K562 (cell line): ENCODE measurements at regions of chr2 and their contacts with region 1.

Region 1: GRCh38 chr2:27133905-27134780 is at the start of gene PREB:
- DNase-seq: peak; percentile 97 to 99 (median 98)
- ATAC-seq: peak; percentile 98
- H3K4me3 ChIP-seq: peak within 1 kb of the TSS; percentile 98
- H3K27ac ChIP-seq: peak within 1 kb of the TSS; percentile 85
- H3K4me1 ChIP-seq: peaks cover 15 to 35% of the 10 kb centered on the region in 2 experiments; a peak in 4 of 5 replicates
- H3K27me3 ChIP-seq: no peaks in the 10 kb centered on the region
- CTCF ChIP-seq: peak; percentile 47 to 52 (median 50); a peak in 5 of 6 replicates
- EP300 ChIP-seq: no peak
- POLR2A ChIP-seq: peak; percentile 86
- RAD21 ChIP-seq: peak in 1 of 2 experiments; percentile 32; a peak in 2 of 4 replicates
- polyA plus RNA-seq, gene PREB: 35.1 to 35.4 TPM

Region 2: GRCh38 chr2:27123302-27124231 is 10.6 kb before region 1 on chr2 and contains the start of gene ABHD1:
- CTCF ChIA-PET with region 1: interaction called, 3 read pairs
- POLR2A ChIA-PET with region 1: interaction called, 12 read pairs
- in situ Hi-C with region 1: no loop called
- intact Hi-C with region 1: no loop called
- DNase-seq: peak; percentile 63 to 91 (median 78)
- ATAC-seq: peak; percentile 90
- H3K4me3 ChIP-seq: peak within 1 kb of the TSS; percentile 54
- H3K27ac ChIP-seq: no peak within 1 kb of the TSS
- H3K4me1 ChIP-seq: peaks cover 10 to 18% of the 10 kb centered on the region in 2 experiments; a peak in 4 of 5 replicates
- H3K27me3 ChIP-seq: peaks cover 7 to 11% of the 10 kb centered on the region in 2 experiments; a peak in 4 of 5 replicates
- CTCF ChIP-seq: peak in 1 of 3 experiments; percentile 20; a peak in 1 of 6 replicates
- EP300 ChIP-seq: no peak
- POLR2A ChIP-seq: no peak
- RAD21 ChIP-seq: no peak
- polyA plus RNA-seq, gene ABHD1: 0.11 TPM in 1 of 2 experiments, not detected in the other